ENCODE measurements at regions of chr9 and their contacts with region 1.

Region 1: DNA sequence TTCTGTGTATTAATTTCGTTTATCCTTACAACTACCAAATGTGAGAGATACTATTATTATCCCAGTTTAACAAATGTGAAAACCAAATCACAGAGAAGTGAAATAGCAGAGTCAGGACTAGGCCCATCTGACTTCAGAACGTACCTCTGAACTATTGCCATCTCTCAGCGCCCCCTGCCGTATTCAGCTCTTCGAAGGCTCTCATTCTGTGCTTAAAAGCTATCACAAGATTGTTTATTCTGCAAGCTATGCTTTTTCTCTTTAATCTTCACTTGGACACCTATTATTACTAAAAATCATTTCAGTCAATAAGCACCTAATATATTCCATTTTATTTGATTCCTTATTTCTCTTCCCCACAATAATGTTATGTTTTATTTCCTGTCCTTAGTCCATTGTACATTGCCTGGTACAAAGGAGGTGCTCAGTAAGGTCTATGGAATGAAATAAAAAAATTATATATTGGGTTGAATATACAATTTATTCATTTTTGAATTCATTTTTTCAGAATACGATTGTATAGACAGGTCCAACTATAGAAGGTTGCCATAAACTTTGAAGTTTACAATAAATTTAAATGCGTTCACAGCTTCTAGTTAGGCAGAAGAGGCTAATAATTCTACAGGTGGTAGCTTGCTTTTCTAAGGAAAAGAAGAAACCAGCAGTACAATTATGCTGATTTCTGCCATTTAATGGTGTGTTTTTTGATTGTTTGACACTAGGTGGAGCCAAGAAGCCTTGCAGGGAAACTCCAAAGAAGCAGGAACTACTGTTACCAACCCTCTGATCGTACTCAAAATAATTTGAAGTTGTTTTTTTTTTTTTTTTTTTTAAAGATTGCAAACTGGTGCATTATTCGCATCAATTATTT is 202.2 kb upstream of the DMRTA1 start:
- DNase-seq: peak in 4 of 35 experiments; percentile 8 to 52 (median 17)
- ATAC-seq: peak in 2 of 4 experiments; percentile 45 to 82
- H3K4me3 ChIP-seq: no peak overlapping the region
- H3K4me3 Mint-ChIP-seq: no peak overlapping the region
- H3K27ac ChIP-seq: no peak overlapping the region
- H3K27ac Mint-ChIP-seq: no peak overlapping the region
- H3K4me1 ChIP-seq: no peaks in the 10 kb centered on the region
- H3K4me1 Mint-ChIP-seq: peaks cover 4 to 13% (median 10%) of the 10 kb centered on the region in 3 donors
- H3K27me3 ChIP-seq: no peaks in the 10 kb centered on the region
- H3K27me3 Mint-ChIP-seq: peaks cover 5 to 15% of the 10 kb centered on the region in 2 donors

Region 2: DNA sequence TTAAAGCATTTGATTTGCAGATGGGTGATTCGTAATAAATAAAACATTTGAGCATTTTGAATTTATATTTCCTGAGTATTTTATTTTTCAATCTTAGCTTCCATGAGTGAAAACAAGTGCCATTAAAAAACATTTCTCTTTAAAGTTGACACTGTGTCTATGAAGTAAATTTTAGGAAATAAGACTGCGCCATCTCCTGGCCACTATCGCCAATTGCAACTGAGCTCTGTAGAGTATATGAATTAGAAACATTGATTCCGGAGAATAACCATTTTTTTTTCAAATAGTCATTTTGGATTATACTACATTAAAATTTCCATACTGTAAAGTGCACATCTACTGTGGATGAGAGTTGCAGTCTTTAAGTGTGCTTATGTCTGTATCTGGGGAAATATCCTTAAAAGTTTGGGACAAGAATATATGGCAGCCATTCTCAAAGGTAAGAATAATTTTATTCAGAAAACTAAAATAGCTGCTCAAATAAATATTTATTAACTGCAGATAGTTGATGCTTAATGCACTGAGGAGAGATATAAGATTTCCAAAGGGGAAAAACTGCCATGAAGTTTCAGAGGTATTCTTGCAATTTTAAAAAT is 208.1 kb after region 1 on chr9:
- CTCF ChIA-PET with region 1: interaction called, 7 read pairs
- POLR2A ChIA-PET with region 1: interaction called in 1 of 2 experiments, 11 read pairs
- DNase-seq: peak in 18 of 35 experiments; percentile 10 to 57 (median 27)
- ATAC-seq: peak in 1 of 4 experiments; percentile 42
- H3K4me3 ChIP-seq: no peak overlapping the region
- H3K4me3 Mint-ChIP-seq: no peak overlapping the region
- H3K27ac ChIP-seq: no peak overlapping the region
- H3K27ac Mint-ChIP-seq: no peak overlapping the region
- H3K4me1 ChIP-seq: peaks cover 0 to under 1% of the 10 kb centered on the region in 2 experiments
- H3K4me1 Mint-ChIP-seq: peaks cover 0 to 6% (median 6%) of the 10 kb centered on the region in 3 donors
- H3K27me3 ChIP-seq: peaks cover 3 to 4% of the 10 kb centered on the region in 2 experiments
- H3K27me3 Mint-ChIP-seq: peaks cover 31 to 34% of the 10 kb centered on the region in 2 donors